GM10248 (cell line): ENCODE measurements at regions of chr2 and their contacts with region 1.

Region 1: GRCh38 chr2:10072656-10073480 is 7.3 kb downstream of the CYS1 start:
- DNase-seq: peak; percentile 90
- CTCF ChIP-seq: peak; percentile 83

Region 2: GRCh38 chr2:9941196-9941995 is 131.5 kb before region 1 on chr2:
- CTCF ChIA-PET with region 1: no interaction called
- POLR2A ChIA-PET with region 1: no interaction called
- DNase-seq: no peak
- CTCF ChIP-seq: no peak

Region 3: DNA sequence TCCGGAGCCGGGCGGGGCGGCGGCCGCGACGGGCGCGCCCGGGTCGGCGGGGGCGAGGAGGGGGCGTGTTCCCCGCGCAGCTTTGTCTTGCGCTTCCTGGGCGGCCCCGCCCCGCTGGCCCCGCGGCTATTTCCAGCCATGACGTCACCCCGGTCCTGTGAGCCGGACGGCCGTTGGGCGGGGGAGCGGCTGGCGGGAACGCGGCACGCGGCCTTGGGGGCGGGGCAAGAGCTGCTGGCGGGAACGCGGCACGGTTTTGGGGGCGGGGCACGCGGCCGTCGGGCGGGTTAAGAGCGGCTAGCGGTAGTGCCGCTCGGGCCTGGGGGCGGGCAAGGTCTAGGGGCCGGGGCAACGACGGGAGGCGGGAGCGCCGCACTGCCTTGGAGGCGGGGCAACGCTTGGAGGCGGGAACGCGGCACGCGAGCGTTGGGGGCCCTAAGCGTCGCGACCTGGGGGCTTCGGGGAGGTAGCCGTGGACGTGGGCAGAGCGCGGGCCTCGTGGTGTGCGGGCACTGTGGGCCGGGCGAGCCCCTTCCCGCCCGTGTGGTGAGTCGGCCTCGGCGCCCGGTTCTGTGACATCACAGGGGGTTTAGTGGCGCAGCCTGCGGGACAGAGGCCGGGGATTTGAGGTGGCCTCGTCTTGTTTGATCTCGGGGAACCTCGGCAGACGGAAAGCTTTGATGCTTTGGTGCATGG is 28.8 kb before region 1 on chr2:
- CTCF ChIA-PET with region 1: interaction called, 74 read pairs
- POLR2A ChIA-PET with region 1: no interaction called
- DNase-seq: peak; percentile 93
- CTCF ChIP-seq: no peak

Region 4: GRCh38 chr2:10057231-10058107 is 15.4 kb before region 1 on chr2:
- CTCF ChIA-PET with region 1: interaction called, 74 read pairs
- POLR2A ChIA-PET with region 1: no interaction called
- DNase-seq: peak; percentile 65
- CTCF ChIP-seq: no peak

Region 5: DNA sequence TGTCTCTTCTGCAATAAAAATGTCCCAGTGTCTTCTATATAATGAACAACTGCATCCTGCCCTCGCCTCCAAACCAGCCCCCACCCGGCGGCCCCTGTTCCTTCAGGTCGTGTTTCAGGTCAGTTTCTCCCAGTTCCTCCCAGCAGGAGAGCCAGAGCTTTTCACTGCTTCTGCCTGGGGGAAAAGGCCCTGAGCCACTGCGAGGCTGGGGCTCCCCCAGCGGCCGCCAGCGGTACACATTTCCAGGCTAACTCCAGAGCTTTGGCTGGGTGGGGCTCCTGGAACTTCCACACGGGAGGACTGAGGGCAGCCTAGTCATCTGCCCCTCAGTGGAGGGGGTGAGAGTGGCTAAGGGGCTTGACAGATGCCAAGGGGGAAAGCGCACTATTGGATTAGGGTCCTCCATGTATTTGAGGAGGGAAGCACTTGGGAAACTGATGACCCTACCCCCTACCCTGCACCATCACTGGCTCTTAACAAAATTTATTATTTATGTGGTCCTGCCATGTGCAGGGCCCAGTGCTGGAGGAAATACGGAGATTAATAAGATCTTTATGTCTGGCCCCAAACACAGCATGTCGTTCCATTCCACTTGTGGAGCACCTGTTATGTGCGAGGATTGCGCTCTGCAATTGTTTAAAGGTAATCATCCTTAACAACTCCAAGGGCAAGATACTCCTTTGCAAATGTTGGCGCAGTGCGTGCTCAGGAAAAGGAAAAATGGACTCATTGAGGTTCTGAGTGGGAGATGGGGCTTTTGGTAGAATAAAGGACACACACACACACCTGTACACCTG is 24.7 kb after region 1 on chr2:
- CTCF ChIA-PET with region 1: interaction called, 390 read pairs
- POLR2A ChIA-PET with region 1: no interaction called
- DNase-seq: peak; percentile 76
- CTCF ChIP-seq: peak; percentile 92

Region 6: DNA sequence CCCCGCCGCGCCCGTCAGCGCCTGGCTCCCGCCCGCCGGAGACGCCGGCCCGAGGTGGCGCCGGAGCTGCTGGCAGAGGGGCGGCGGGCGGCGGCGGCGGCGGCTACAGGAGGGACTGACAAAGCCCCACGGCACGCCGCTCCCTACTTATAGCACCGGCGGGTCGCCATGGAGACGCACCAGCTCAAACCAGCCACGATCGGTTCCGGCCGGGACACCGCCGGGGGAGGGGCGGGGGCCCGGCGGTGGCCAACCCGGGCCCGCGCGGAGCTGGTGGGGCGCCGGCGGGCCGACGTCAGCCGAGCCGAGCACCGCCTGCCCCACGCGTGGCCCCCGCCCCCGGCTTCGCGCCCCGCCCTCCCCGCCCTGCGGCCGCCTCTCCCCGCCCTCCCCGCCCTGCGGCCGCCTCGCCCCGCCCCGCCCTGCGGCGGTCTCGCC is 375.4 kb after region 1 on chr2 and contains the start of gene ODC1:
- CTCF ChIA-PET with region 1: interaction called, 28 read pairs
- POLR2A ChIA-PET with region 1: no interaction called
- DNase-seq: peak; percentile 98
- CTCF ChIP-seq: no peak